ENCODE measurements at regions of chr20 and their contacts with region 1.

Region 1: GRCh38 chr20:63495741-63496595 is 2.9 kb downstream of the EEF1A2 start:
- DNase-seq: no peak
- H3K4me3 ChIP-seq: peak overlapping the region; percentile 39 to 56 (median 44)
- H3K27ac ChIP-seq: no peak overlapping the region
- H3K4me1 ChIP-seq: peaks cover 21 to 44% (median 38%) of the 10 kb centered on the region in 4 donors
- H3K27me3 ChIP-seq: peaks cover 4 to 81% (median 33%) of the 10 kb centered on the region in 4 donors
- CTCF ChIP-seq: peak in 2 of 3 experiments; percentile 76 to 92
- EP300 ChIP-seq: no peak
- POLR2A ChIP-seq: no peak

Region 2: GRCh38 chr20:63519721-63520503 is 23.9 kb after region 1 on chr20:
- intact Hi-C with region 1: loop called (anchors 2 kb)
- DNase-seq: no peak
- H3K4me3 ChIP-seq: peak overlapping the region; percentile 86 to 99 (median 93)
- H3K27ac ChIP-seq: peak overlapping the region; percentile 94 to 98 (median 96)
- H3K4me1 ChIP-seq: peaks cover 28 to 40% (median 35%) of the 10 kb centered on the region in 4 donors
- H3K27me3 ChIP-seq: no peaks in the 10 kb centered on the region
- CTCF ChIP-seq: peak; percentile 18 to 40 (median 31)
- EP300 ChIP-seq: no peak
- POLR2A ChIP-seq: no peak